CD8-positive, alpha-beta T cell (primary cell): ENCODE measurements at regions of chr14 and their contacts with region 1.

Region 1: DNA sequence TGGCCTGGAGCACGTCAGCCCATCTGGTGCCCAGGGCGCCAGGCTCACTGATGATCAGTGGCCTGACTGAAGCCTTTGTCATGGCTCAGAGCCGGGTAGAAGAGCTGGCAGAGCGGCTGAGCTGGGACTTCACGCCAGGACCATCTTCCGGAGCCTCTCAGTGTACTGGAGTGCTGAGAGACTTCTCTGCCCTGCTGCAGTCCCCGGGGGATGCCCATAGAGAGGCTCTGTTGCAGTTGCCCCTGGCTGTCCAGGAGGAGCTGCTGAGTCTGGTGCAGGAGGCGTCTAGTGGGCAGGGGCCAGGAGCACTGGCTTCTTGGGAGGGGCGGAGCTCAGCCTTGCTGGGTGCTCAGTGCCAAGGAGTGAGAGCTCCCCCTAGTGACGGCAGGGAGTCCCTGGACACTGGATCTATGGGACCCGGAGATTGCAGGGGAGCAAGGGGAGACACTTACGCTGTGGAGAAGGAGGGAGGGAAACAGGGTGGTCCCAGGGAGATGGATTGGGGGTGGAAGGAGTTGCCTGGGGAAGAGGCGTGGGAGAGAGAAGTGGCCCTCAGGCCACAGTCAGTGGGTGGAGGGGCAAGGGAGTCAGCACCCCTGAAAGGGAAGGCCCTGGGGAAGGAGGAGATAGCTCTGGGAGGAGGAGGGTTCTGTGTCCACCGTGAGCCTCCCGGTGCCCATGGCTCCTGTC is 2.0 kb downstream of the KHNYN start:
- DNase-seq: peak; percentile 77 to 94 (median 90)
- ATAC-seq: peak; percentile 52
- H3K4me3 ChIP-seq: peak overlapping the region in 1 of 2 experiments; percentile 71
- H3K4me3 Mint-ChIP-seq: peak overlapping the region; percentile 93
- H3K27ac ChIP-seq: peak overlapping the region; percentile 31 to 90
- H3K27ac Mint-ChIP-seq: peak overlapping the region; percentile 98
- H3K4me1 ChIP-seq: peaks cover 47% of the 10 kb centered on the region
- H3K4me1 Mint-ChIP-seq: peaks cover 45% of the 10 kb centered on the region
- H3K27me3 ChIP-seq: no peaks in the 10 kb centered on the region
- H3K27me3 Mint-ChIP-seq: no peaks in the 10 kb centered on the region
- CTCF ChIP-seq: peak; percentile 83

Region 2: DNA sequence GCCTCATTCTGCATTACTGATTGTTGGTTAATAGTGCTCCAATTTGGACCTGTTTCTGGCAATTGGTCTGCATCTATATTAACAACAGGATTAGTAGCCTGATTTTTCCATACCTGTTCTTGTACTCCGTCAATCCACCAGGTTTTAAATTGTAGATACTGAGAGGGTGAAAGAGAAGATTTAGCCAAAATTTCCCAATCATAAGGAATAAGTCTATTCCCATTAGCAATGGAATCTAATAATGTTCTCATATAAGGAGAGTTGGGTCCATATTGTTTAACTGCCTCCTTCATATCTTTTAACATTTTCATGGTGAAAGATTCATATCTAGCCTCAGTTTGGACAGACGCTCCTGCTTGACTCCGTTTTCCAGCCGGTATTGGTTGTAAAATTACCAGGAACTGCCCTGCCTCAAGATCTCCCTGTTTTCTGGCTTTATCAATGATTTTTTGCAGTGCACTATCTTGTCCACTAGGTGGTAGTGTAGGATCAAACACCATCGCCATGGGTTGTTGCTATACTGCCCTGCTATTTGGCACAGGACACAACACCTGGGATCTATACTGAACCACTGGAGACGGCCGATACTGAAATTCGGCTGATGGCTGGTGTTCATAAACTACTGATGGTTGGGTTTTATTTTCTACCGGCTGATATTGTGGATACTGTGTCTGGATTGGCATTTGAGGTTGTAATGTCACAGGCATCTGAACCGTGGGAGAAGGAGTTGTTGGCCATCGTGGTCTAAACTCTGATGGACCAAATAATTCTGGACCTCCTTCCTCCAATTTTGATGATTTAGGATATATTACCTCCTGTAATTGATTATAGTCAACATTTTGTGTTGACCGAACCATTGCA is 417.8 kb before region 1 on chr14:
- CTCF ChIA-PET with region 1: no interaction called
- POLR2A ChIA-PET with region 1: no interaction called
- intact Hi-C with region 1: loop called (anchors 5 kb)
- DNase-seq: peak in 8 of 9 experiments; percentile 14 to 84 (median 50)
- ATAC-seq: peak; percentile 99
- H3K4me3 ChIP-seq: no peak overlapping the region
- H3K4me3 Mint-ChIP-seq: no peak overlapping the region
- H3K27ac ChIP-seq: no peak overlapping the region
- H3K27ac Mint-ChIP-seq: no peak overlapping the region
- H3K4me1 ChIP-seq: peaks cover 7% of the 10 kb centered on the region
- H3K4me1 Mint-ChIP-seq: peaks cover 25% of the 10 kb centered on the region
- H3K27me3 ChIP-seq: no peaks in the 10 kb centered on the region
- H3K27me3 Mint-ChIP-seq: no peaks in the 10 kb centered on the region
- CTCF ChIP-seq: peak; percentile 93

Region 3: DNA sequence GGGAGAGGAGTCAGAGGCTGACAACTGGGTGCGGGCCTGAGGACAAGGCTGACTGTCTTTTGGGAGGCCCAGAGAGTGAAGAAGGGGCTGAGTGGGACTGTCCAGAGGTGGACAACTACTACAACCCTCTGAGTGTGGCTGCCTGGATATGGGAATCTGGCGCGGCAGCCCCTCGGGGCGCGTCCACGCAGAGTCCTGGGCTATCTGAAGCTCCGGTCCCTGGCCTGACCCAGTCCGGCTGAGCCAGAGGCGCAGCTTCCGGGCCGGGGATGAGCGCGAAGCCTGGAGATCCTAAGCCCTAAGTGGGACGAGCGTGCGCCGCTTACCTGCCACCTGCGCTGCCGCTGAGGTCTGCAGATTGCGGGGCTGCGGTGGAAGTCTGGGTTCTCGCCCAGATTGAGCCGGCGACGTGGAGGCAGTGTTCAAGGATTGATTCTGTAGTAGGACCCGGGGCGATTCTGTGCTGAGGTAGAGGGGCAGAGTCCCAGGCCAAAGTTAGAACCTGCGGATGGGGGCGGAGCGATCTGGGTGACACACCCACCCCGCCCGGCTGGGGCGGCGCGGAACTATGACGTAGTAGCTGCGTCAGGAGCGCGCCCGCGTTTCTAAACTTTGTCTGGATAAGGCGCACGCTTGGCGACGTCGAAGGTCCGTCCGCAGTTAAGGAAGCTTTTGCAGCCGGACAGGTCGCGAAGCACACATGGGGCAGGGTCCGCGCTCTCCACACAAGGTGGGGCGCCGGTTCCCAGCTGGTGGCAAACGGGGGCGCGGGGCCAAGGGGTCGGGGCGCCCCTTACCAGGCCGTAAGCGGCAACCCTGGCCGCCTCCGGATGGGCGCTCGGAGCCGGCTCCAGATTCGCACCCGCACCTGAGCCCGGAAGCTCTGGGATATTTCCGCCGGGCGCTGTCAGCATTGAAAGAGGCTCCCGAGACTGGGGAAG is 132.2 kb before region 1 on chr14 and contains the starts of genes DHRS1 and NOP9:
- CTCF ChIA-PET with region 1: interaction called, 10 read pairs
- POLR2A ChIA-PET with region 1: interaction called, 4 read pairs
- intact Hi-C with region 1: no loop called
- DNase-seq: peak; percentile 82 to 98 (median 92)
- ATAC-seq: peak; percentile 78
- H3K4me3 ChIP-seq: peak within 1 kb of the TSS; percentile 80 to 83
- H3K4me3 Mint-ChIP-seq: peak within 1 kb of the TSS; percentile 94
- H3K27ac ChIP-seq: peak within 1 kb of the TSS; percentile 80 to 85
- H3K27ac Mint-ChIP-seq: peak within 1 kb of the TSS; percentile 96
- H3K4me1 ChIP-seq: peaks cover 28% of the 10 kb centered on the region
- H3K4me1 Mint-ChIP-seq: peaks cover 51% of the 10 kb centered on the region
- H3K27me3 ChIP-seq: no peaks in the 10 kb centered on the region
- H3K27me3 Mint-ChIP-seq: no peaks in the 10 kb centered on the region
- CTCF ChIP-seq: no peak
- total RNA-seq, gene DHRS1: 24.3 to 28.5 TPM
- total RNA-seq, gene NOP9: 35.6 to 35.8 TPM

Region 4: DNA sequence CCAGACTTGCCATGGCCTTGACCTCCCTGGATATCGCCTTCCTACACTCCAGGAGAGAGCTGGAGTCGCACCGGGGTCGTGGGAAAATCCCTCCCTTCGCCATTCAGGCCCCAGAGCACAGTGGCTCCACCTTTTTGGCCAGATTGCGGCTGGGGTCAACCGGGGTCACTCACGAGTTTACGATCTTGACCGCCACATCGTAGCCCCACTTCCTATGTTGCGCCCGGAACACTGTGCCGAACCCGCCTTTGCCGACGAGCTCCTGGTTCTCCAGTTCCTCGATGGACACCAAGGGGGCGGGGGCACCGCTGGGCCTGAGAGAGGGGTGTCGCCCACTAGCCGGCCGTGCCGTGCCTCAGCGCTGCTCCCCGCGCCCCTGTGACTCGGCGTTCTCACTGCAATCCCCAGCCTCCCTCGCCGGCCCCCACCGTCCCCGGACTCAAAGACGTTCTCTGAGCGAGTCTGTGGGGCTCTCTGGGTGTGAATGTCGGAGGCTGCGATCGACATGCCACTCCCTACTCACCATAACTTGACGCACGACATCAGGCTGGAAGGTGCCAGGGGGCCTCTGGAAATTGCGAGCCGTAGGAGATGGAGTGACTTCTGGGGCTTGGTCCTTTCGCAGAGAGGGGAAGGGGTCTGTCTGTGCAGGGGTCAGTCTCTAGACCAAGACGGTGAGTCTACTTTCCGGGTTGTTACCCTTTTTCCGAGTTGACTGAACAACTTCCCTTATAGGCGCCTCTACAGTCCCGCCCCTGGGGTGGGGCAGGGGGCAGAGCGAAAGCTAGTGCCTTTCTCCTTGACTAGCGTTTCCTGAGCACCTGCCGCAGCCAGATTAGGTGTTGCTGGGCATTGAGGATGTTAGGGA is 92.2 kb before region 1 on chr14 and contains the start of gene RIPK3:
- CTCF ChIA-PET with region 1: interaction called, 442 read pairs
- POLR2A ChIA-PET with region 1: interaction called, 75 read pairs
- intact Hi-C with region 1: loop called in 1 of 2 experiments (anchors 1 kb)
- DNase-seq: peak in 8 of 9 experiments; percentile 55 to 82 (median 72)
- ATAC-seq: peak; percentile 93
- H3K4me3 ChIP-seq: peak within 1 kb of the TSS; percentile 75 to 76
- H3K4me3 Mint-ChIP-seq: peak within 1 kb of the TSS; percentile 94
- H3K27ac ChIP-seq: peak within 1 kb of the TSS; percentile 32 to 61
- H3K27ac Mint-ChIP-seq: peak within 1 kb of the TSS; percentile 95
- H3K4me1 ChIP-seq: peaks cover 21% of the 10 kb centered on the region
- H3K4me1 Mint-ChIP-seq: peaks cover 32% of the 10 kb centered on the region
- H3K27me3 ChIP-seq: peaks cover 0 to 11% of the 10 kb centered on the region in 2 experiments
- H3K27me3 Mint-ChIP-seq: peaks cover 14% of the 10 kb centered on the region
- CTCF ChIP-seq: no peak
- total RNA-seq, gene RIPK3: 17.6 to 19.3 TPM

Region 5: GRCh38 chr14:24411443-24412389 is 20.0 kb before region 1 on chr14:
- CTCF ChIA-PET with region 1: interaction called, 21 read pairs
- POLR2A ChIA-PET with region 1: interaction called, 4 read pairs
- intact Hi-C with region 1: loop called in 1 of 2 experiments (anchors 1 kb)
- DNase-seq: peak in 3 of 9 experiments; percentile 35 to 59 (median 51)
- ATAC-seq: peak; percentile 59
- H3K4me3 ChIP-seq: no peak overlapping the region
- H3K4me3 Mint-ChIP-seq: no peak overlapping the region
- H3K27ac ChIP-seq: no peak overlapping the region
- H3K27ac Mint-ChIP-seq: no peak overlapping the region
- H3K4me1 ChIP-seq: no peaks in the 10 kb centered on the region
- H3K4me1 Mint-ChIP-seq: no peaks in the 10 kb centered on the region
- H3K27me3 ChIP-seq: no peaks in the 10 kb centered on the region
- H3K27me3 Mint-ChIP-seq: peaks cover 5% of the 10 kb centered on the region
- CTCF ChIP-seq: peak; percentile 50

Region 6: GRCh38 chr14:24442273-24443052 is 10.7 kb after region 1 on chr14 and contains the start of gene SDR39U1:
- CTCF ChIA-PET with region 1: interaction called, 40 read pairs
- POLR2A ChIA-PET with region 1: interaction called, 49 read pairs
- intact Hi-C with region 1: loop called (anchors 1 kb)
- DNase-seq: peak; percentile 93 to 100 (median 95)
- ATAC-seq: peak; percentile 89
- H3K4me3 ChIP-seq: peak within 1 kb of the TSS; percentile 77 to 89
- H3K4me3 Mint-ChIP-seq: peak within 1 kb of the TSS; percentile 95
- H3K27ac ChIP-seq: peak within 1 kb of the TSS; percentile 96
- H3K27ac Mint-ChIP-seq: peak within 1 kb of the TSS; percentile 97
- H3K4me1 ChIP-seq: peaks cover 35% of the 10 kb centered on the region
- H3K4me1 Mint-ChIP-seq: peaks cover 45% of the 10 kb centered on the region
- H3K27me3 ChIP-seq: no peaks in the 10 kb centered on the region
- H3K27me3 Mint-ChIP-seq: no peaks in the 10 kb centered on the region
- CTCF ChIP-seq: no peak
- total RNA-seq, gene SDR39U1: 75.0 to 84.4 TPM

Region 7: DNA sequence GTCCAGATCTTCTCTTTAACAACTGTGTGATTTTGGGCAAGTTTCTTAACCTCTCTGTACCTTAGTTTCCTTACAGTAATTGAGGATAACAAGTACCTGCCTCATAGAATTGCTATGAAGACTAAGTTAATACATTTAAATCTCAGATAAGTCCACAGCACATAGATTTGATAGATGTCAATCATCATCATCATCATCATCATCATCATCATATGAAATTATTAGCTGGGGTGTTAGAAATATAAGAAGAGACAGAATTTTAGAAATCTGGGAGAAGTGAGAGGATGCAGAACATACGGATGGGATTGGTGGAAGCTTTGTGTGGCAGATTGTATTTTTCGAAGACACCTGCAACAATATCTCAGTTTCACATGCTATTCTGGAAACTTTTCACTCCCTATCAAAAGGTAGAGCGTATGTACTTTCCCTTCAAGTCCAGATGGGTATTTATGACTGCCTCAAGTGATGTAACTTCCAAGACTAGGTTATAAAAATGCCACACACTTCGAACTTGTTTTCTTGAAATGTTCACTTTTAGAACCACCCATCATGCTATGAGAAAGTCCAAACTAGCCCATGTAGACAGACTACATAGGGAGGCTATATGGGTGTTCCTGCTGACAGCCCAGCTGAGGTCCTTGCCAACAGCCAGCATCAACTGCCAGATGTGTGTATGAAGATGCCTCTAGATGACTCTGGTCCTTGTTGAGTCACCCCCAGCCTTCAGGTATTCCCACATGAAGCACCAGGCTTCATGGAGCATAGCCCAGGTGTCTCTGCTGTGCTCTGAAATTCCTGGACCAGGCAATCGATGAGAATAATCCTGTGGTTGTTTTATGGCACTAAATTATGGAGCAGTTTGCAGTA is 31.5 kb after region 1 on chr14:
- CTCF ChIA-PET with region 1: no interaction called
- POLR2A ChIA-PET with region 1: no interaction called
- intact Hi-C with region 1: no loop called
- DNase-seq: no peak
- ATAC-seq: no peak
- H3K4me3 ChIP-seq: no peak overlapping the region
- H3K4me3 Mint-ChIP-seq: no peak overlapping the region
- H3K27ac ChIP-seq: no peak overlapping the region
- H3K27ac Mint-ChIP-seq: no peak overlapping the region
- H3K4me1 ChIP-seq: peaks cover 23% of the 10 kb centered on the region
- H3K4me1 Mint-ChIP-seq: peaks cover 18% of the 10 kb centered on the region
- H3K27me3 ChIP-seq: no peaks in the 10 kb centered on the region
- H3K27me3 Mint-ChIP-seq: no peaks in the 10 kb centered on the region
- CTCF ChIP-seq: no peak